Dorsolateral prefrontal cortex (tissue), 120 donors: ENCODE measurements at regions of chr2 and their contacts with region 1.

Region 1: DNA sequence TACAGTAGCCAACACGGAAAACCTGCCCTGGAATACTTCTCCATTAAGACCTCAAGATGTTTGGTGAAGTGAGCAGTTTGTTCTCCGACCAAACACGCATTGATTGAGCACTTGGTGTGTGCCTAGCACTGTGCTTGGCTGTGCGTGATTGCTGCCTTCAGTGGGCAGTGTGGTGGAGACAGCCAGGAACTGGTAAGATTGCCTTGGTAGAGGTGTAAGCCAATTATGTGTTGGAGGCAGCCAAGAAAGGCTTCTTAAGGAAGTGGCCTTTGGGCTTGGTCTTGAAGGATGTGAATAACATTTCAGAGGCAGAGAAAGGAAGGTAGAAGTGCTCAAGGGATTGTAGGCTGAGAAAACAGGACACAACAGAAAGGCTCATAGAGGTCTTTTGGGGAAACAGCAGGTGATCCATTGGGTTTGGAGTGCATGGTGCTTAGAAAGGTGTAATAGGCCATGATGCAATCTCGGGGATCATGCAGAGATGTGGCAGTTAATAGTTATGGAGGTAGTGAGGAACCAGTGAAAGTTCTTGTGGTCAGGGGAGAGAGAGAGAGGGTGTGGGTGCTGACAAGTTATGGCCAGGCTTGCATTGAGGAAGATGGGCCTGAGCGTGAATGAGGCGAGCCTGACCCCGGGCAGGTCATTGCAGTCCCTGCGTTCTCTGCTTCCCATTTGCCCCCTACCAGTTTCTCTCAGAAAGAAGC is 6.3 kb downstream of the B3GNT2 start:
- DNase-seq: no peak
- H3K4me3 ChIP-seq: no peak overlapping the region
- H3K27ac ChIP-seq: peak overlapping the region in 7 of 59 donors; percentile 1 to 55 (median 28)
- H3K27me3 ChIP-seq: no peaks in the 10 kb centered on the region
- CTCF ChIP-seq: no peak

Region 2: GRCh38 chr2:61910603-61911002 is 291.6 kb before region 1 on chr2:
- intact Hi-C with region 1: loop called in 1 of 2 experiments (anchors 10 kb)
- DNase-seq: no peak
- H3K4me3 ChIP-seq: no peak overlapping the region
- H3K27ac ChIP-seq: no peak overlapping the region
- H3K27me3 ChIP-seq: no peaks in the 10 kb centered on the region
- CTCF ChIP-seq: peak in 32 of 56 donors; percentile 9 to 40 (median 23)

Region 3: DNA sequence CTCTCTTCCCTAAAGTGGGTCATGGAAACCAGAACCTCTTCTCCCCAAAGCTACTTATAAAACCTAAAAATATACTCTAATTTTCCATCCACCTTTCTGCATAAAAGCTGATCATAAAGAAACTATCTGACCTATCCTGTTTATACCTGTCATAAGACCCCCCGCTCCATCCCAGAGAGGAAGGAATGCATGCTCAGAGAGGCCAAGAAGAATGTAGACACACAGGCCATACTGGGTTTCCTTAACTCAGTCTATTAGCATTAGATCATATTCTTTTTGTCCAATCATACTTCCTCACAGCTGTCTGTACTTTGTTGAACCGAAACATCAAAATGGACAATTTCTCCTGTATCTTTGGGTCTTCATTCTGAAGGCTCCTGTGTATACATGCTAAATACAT is 46.0 kb after region 1 on chr2:
- intact Hi-C with region 1: no loop called
- DNase-seq: no peak
- H3K4me3 ChIP-seq: no peak overlapping the region
- H3K27ac ChIP-seq: no peak overlapping the region
- H3K27me3 ChIP-seq: no peaks in the 10 kb centered on the region
- CTCF ChIP-seq: no peak